ENCODE measurements at regions of chr3 and their contacts with region 1.

Region 1: DNA sequence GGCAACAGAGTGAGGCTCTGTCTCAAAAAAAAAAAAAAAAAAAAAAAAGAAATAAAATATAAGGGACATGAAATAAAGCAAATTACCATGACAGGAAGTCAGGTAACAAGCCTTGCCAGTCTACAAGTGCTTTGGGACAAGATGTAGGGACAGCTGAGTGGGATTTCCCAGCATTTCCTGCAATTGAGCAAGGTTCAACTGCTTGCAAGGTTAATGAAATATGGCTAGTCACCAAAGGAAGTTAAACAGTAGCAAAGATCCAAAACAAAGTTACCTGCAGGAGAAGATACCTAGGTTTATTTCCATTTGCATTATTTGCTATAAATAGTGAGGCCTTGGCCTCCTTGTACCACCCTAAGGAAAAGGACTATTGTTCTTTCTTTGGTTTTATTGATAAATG is 22.3 kb upstream of the CNOT10 start:
- DNase-seq: no peak
- H3K4me3 Mint-ChIP-seq: no peak overlapping the region
- H3K27ac Mint-ChIP-seq: no peak overlapping the region
- H3K4me1 Mint-ChIP-seq: no peaks in the 10 kb centered on the region
- H3K27me3 Mint-ChIP-seq: peaks cover 5% of the 10 kb centered on the region

Region 2: GRCh38 chr3:32510075-32510724 is 152.4 kb before region 1 on chr3:
- CTCF ChIA-PET with region 1: interaction called, 10 read pairs
- DNase-seq: peak; percentile 81
- H3K4me3 Mint-ChIP-seq: no peak overlapping the region
- H3K27ac Mint-ChIP-seq: no peak overlapping the region
- H3K4me1 Mint-ChIP-seq: peaks cover 3% of the 10 kb centered on the region
- H3K27me3 Mint-ChIP-seq: no peaks in the 10 kb centered on the region

Measured in activated naive CD4-positive, alpha-beta T cell treated with anti-CD3 and anti-CD28 coated beads, Interleukin-2, amount 10 ng/mL, durations not matched to agents 7 days and 5 days (primary cell).